ENCODE measurements at regions of chr1 and their contacts with region 1.

Region 1: GRCh38 chr1:197736644-197737043 is 38.6 kb downstream of the DENND1B start:
- DNase-seq: no peak
- H3K4me3 Mint-ChIP-seq: no peak overlapping the region
- H3K27ac Mint-ChIP-seq: no peak overlapping the region
- H3K4me1 Mint-ChIP-seq: peaks cover 17% of the 10 kb centered on the region
- H3K27me3 Mint-ChIP-seq: no peaks in the 10 kb centered on the region
- CTCF ChIP-seq: no peak

Region 2: DNA sequence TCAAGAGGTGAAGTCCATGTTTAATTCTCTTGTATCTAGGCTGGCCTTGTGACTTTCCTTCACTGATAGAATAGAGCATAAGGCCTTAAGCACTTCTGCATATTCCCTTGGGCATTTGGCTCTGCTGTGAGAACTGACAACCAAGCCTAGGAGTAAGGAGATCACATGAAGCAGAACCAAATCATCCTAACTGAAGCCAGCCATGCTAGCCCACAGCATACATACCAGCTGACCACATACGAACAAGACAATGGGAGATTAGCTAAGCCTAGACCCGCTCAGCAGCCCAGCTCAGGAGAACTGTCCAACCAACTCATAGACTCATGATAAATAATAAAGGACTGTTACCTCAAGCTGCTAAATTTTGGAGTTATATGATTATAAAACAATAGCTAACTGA is 305.5 kb after region 1 on chr1:
- CTCF ChIA-PET with region 1: no interaction called
- intact Hi-C with region 1: no loop called
- DNase-seq: no peak
- H3K4me3 Mint-ChIP-seq: no peak overlapping the region
- H3K27ac Mint-ChIP-seq: no peak overlapping the region
- H3K4me1 Mint-ChIP-seq: no peaks in the 10 kb centered on the region
- H3K27me3 Mint-ChIP-seq: no peaks in the 10 kb centered on the region
- CTCF ChIP-seq: no peak

Region 3: DNA sequence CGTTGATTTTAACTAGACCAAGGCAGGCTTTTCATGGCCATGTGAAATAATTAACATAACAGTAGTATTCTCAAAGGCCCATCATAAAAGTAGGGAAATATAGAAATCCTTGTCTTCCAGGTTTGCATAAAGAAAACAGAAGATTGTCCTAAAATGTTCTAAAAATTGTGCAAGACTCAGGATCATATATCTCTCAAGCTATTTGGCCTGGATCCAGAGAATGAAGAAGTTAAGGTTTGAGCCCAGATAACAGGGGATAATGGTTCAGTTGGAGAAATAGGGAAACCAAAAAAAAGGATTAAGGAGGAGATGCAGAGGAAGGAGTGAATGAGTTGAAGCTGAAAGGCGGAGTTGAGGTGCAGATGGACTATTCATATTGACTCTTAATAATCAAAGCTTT is 1735.4 kb after region 1 on chr1:
- CTCF ChIA-PET with region 1: no interaction called
- intact Hi-C with region 1: loop called (anchors 10 kb)
- DNase-seq: no peak
- H3K4me3 Mint-ChIP-seq: no peak overlapping the region
- H3K27ac Mint-ChIP-seq: no peak overlapping the region
- H3K4me1 Mint-ChIP-seq: no peaks in the 10 kb centered on the region
- H3K27me3 Mint-ChIP-seq: no peaks in the 10 kb centered on the region
- CTCF ChIP-seq: no peak

Measured in Calu3 (cell line).